Activated T-helper 2 cell treated with anti-CD3 and anti-CD28 coated beads, Interferon-gamma antibody, Interleukin-2, Interleukin-4, amounts not matched to agents 10 μg/mL and 5 μg/mL and 100 μg/mL, durations not matched to agents 14 hours and 24 hours and 36 hours (primary cell): ENCODE measurements at regions of chr11 and their contacts with region 1.

Region 1: DNA sequence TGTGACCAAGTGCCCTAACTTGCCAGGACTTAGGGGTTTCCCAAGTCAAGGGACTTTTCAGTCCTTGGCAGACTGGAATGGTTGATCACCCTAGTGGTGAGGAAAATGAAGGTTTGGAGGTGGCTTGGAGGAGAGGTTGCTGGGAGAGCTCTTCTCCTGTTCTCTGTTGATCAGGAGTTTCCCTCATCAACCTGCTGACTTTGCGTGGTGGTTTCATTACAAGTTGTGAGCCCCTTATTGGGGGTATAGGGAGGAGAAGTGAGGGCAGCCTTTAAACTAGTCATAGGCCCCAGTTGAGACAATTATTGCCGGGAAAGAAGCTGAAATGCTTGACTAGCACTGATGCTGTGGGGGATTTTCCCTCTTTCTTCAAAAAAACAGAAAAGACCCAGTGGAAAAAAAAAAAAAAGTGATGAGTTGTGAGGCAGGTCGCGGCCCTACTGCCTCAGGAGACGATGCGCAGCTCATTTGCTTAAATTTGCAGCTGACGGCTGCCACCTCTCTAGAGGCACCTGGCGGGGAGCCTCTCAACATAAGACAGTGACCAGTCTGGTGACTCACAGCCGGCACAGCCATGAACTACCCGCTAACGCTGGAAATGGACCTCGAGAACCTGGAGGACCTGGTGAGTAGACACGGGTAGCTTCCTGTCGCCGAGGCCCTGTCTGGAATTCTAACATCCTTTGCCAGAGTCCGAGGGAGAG is at the start of gene CXCR5:
- DNase-seq: no peak
- H3K4me3 Mint-ChIP-seq: peak within 1 kb of the TSS; percentile 79
- H3K27ac Mint-ChIP-seq: peak within 1 kb of the TSS; percentile 86
- H3K4me1 Mint-ChIP-seq: peaks cover 62% of the 10 kb centered on the region
- H3K27me3 Mint-ChIP-seq: no peaks in the 10 kb centered on the region
- total RNA-seq, gene CXCR5: 7.5 and 8.1 TPM in 2 replicates

Region 2: GRCh38 chr11:118845369-118845768 is 38.2 kb before region 1 on chr11:
- intact Hi-C with region 1: loop called (anchors 2 kb)
- DNase-seq: no peak
- H3K4me3 Mint-ChIP-seq: no peak overlapping the region
- H3K27ac Mint-ChIP-seq: peak overlapping the region; percentile 80
- H3K4me1 Mint-ChIP-seq: peaks cover 23% of the 10 kb centered on the region
- H3K27me3 Mint-ChIP-seq: no peaks in the 10 kb centered on the region

Region 3: DNA sequence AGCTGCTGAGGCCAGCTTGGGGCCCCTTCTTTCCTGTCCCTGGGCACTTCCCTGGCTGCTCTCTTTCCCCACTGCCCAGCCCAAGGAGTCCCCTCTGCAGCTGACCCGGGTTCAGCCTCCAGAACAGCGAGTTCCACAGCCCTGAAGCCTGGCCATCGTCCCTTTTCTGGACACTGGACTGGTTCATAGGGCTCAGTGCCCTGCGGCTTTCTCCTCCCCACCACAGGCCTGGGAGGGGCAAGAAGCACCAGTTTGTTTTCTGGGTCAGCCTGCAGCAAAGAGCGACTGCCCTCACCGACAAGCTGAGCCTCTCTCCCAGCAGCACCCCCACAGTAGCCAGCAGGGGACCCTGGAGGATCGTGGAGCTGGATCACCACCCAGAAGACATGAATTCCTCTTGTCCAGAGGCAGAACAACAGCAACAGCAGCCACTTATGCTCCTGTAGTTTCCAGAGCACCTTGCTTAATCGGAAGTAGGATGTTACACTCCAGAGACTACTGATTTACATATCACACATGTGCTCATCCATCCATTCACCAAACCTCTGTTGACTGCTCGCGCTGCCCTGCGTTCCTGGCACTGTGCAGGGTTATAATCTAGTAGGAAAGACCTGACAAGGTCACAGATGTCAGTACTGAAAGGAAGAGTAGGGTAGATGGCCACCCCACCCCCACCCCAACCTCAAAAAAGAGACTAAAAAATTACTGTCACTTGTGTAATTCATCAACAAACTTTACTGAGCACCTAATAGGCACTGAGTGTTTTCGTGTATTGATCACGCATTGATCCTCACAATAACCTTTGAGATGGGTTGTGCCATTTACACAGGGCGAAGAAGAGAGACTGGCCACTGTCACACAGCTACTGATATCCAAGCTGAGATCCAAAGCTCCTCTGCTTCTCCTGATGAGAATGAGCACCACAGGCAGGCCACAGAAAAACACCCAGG is 12.8 kb before region 1 on chr11:
- intact Hi-C with region 1: loop called (anchors 1 kb)
- DNase-seq: no peak
- H3K4me3 Mint-ChIP-seq: peak overlapping the region; percentile 61
- H3K27ac Mint-ChIP-seq: peak overlapping the region; percentile 94
- H3K4me1 Mint-ChIP-seq: peaks cover 40% of the 10 kb centered on the region
- H3K27me3 Mint-ChIP-seq: no peaks in the 10 kb centered on the region